Common myeloid progenitor, CD34-positive (primary cell): ENCODE measurements at regions of chr4 and their contacts with region 1.

Region 1: GRCh38 chr4:15729910-15730533 is 27.2 kb downstream of the BST1 start:
- DNase-seq: peak; percentile 48 to 60 (median 57)
- H3K4me3 ChIP-seq: no peak overlapping the region
- H3K27ac ChIP-seq: no peak overlapping the region
- H3K4me1 ChIP-seq: peaks cover 0 to 3% (median 0%) of the 10 kb centered on the region in 4 experiments
- H3K27me3 ChIP-seq: no peaks in the 10 kb centered on the region

Region 2: GRCh38 chr4:15756361-15756861 is 26.4 kb after region 1 on chr4:
- CTCF ChIA-PET with region 1: interaction called, 19 read pairs
- POLR2A ChIA-PET with region 1: no interaction called
- DNase-seq: peak; percentile 94 to 99 (median 98)
- H3K4me3 ChIP-seq: peak overlapping the region in 5 of 7 experiments; percentile 16 to 72 (median 43)
- H3K27ac ChIP-seq: peak overlapping the region; percentile 13 to 30
- H3K4me1 ChIP-seq: peaks cover 20 to 50% (median 36%) of the 10 kb centered on the region in 4 experiments
- H3K27me3 ChIP-seq: no peaks in the 10 kb centered on the region

Region 3: GRCh38 chr4:15778289-15779241 is 48.5 kb after region 1 on chr4 and contains the start of gene CD38:
- CTCF ChIA-PET with region 1: interaction called, 10 read pairs
- POLR2A ChIA-PET with region 1: no interaction called
- DNase-seq: peak; percentile 66 to 94 (median 90)
- H3K4me3 ChIP-seq: peak within 1 kb of the TSS; percentile 39 to 87 (median 79)
- H3K27ac ChIP-seq: peak within 1 kb of the TSS; percentile 28 to 69
- H3K4me1 ChIP-seq: peaks cover 15 to 53% (median 19%) of the 10 kb centered on the region in 4 experiments
- H3K27me3 ChIP-seq: peaks cover 0 to 33% (median 0%) of the 10 kb centered on the region in 5 experiments

Region 4: DNA sequence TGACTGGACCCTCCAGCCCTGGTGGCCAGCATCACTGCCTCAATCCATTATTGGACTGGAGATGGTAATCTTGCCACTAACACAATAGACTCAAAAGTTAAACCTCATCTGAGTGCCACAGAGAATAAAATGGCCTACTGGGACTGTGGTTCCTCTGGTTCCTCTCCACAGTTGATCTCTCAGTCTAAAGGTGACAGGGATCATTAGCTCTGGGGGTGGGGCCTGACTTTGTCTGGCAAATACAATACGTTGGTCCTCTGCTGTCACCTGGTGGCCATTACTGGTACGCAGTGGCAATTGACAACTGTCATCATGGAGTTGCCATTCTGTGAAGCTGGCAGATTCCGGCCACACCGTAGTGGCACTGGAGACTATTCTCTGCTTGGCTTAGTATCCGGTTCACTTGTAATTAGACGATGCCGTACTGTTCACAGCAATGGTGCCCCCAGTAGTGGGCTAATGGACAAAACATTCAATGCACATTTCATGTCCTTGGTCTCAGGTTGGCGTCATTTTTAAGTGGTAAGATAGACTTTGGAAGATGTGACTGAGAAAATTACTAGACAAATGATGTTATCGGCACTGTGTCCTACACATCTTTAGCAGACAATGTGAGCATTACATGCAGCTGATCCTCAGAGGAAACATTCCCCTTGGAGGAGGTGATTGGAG is 226.3 kb after region 1 on chr4:
- CTCF ChIA-PET with region 1: interaction called, 10 read pairs
- POLR2A ChIA-PET with region 1: no interaction called
- DNase-seq: peak; percentile 82 to 94 (median 91)
- H3K4me3 ChIP-seq: no peak overlapping the region
- H3K27ac ChIP-seq: no peak overlapping the region
- H3K4me1 ChIP-seq: peaks cover 0 to 2% (median 0%) of the 10 kb centered on the region in 4 experiments
- H3K27me3 ChIP-seq: no peaks in the 10 kb centered on the region